ENCODE measurements at regions of chrX and their contacts with region 1.

Region 1: DNA sequence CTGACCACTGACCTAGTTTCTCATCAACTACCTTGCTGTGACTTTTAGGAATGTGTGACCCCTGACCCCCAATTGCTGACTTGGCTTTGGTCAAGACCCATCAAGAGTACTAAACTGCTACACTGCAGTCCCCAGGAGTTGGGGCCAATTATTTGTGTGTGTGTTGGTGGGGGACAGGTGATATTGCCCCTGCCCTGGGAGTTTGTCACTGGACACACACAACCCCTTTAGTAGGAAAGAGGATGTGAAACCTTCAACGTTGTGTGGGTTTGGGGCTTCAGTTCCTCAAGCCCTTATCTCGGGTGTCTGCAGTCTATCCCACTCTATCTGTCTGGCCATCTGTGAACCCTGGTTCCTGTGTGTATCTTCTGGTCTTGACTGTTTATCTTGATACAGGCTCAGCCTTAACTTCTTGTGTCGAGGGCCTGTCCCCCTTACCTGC is 6.5 kb downstream of the SASH3 start:
- DNase-seq: no peak
- ATAC-seq: peak; percentile 73
- H3K4me3 Mint-ChIP-seq: peak overlapping the region; percentile 77
- H3K27ac Mint-ChIP-seq: peak overlapping the region; percentile 85
- H3K4me1 Mint-ChIP-seq: peaks cover 64% of the 10 kb centered on the region
- H3K27me3 Mint-ChIP-seq: no peaks in the 10 kb centered on the region
- CTCF ChIP-seq: no peak

Region 2: GRCh38 chrX:129678614-129679195 is 107.5 kb before region 1 on chrX:
- CTCF ChIA-PET with region 1: interaction called, 4 read pairs
- POLR2A ChIA-PET with region 1: interaction called, 9 read pairs
- intact Hi-C with region 1: loop called (anchors 2 kb)
- DNase-seq: no peak
- ATAC-seq: peak; percentile 28
- H3K4me3 Mint-ChIP-seq: peak overlapping the region; percentile 78
- H3K27ac Mint-ChIP-seq: peak overlapping the region; percentile 65
- H3K4me1 Mint-ChIP-seq: peaks cover 14% of the 10 kb centered on the region
- H3K27me3 Mint-ChIP-seq: no peaks in the 10 kb centered on the region
- CTCF ChIP-seq: no peak

Measured in activated B cell treated with CpG ODN at 0.5 μM for 24 hours (primary cell).